ENCODE measurements at regions of chr7 and their contacts with region 1.

Region 1: DNA sequence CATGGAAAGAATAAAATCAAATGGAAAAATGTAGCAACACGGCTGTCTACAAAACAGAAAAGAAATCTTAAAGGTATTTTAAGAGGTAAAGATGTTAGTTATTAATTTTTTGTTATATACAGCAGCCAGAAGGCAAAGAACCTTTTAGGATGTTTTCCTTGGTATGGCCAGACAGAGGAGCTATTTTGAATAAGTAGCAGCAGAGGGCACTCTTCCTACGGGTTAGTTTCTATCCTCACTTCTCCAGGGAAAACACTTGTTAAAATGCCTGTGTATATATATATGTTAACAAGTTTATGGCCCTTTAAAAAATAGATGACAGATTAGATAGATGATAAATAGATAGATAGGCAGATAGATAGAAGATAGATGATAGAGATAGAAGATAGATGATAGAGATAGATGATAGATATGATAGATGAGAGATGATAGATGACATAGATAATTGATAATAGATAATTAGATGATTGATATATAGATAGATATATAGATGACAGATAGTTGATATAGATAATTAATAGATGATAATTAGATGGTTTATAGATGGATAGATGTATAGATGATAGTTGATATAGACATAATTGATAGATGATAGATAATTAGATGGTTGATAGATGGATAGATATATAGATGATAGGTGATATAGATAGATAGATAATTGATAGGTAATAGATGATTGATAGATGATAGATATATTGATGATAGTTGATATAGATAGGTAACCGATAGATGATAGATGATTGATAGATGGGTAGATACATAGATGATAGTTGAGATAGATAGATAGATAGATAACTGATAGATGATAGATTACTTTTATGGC is 57.8 kb upstream of the WIPF3 start:
- DNase-seq: no peak
- ATAC-seq: peak; percentile 50

Region 2: GRCh38 chr7:29639881-29640595 is 108.5 kb before region 1 on chr7:
- intact Hi-C with region 1: loop called (anchors 10 kb)
- DNase-seq: no peak
- ATAC-seq: no peak

Region 3: GRCh38 chr7:29806208-29806994 is 57.9 kb after region 1 on chr7 and contains the start of gene WIPF3:
- intact Hi-C with region 1: loop called (anchors 2 kb)
- DNase-seq: no peak
- ATAC-seq: peak; percentile 69
- total RNA-seq, gene WIPF3: 5.5 TPM

Region 4: GRCh38 chr7:29818308-29818707 is 69.8 kb after region 1 on chr7:
- intact Hi-C with region 1: no loop called
- DNase-seq: no peak
- ATAC-seq: no peak

Region 5: DNA sequence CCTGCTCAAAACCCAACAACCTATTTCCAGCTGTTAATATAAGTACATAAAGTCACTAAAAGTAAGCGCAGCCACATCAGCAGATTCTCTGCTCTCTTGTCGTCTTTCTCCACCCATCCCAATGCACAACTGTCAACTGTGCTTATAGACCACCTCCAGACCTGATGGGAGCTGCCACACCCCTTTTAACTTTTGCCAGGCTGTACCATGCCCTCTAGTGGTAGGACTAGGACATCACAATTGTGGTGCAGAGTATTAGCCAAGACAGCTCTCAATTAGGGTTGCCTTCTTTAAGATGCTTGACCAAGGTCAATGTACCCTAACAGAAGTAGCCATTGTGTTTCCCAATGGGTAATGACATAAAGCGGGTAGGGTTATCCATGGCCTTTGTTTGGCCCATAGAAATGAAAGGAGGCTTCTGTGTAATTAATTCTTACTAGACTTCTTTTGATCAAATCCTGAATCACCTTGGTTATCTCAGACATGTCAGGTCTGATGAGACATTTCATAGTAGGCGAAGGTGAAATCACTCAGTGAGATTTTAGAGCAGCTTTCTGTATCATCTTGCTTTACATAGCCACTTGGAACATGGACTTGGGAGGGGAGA is 173.0 kb after region 1 on chr7:
- intact Hi-C with region 1: loop called (anchors 1 kb)
- DNase-seq: no peak
- ATAC-seq: peak; percentile 87

Region 6: GRCh38 chr7:30068067-30068466 is 319.6 kb after region 1 on chr7:
- intact Hi-C with region 1: loop called (anchors 5 kb)
- DNase-seq: no peak
- ATAC-seq: peak; percentile 83